Breast epithelium (tissue), 4 donors: ENCODE measurements at regions of chr6 and their contacts with region 1.

Region 1: DNA sequence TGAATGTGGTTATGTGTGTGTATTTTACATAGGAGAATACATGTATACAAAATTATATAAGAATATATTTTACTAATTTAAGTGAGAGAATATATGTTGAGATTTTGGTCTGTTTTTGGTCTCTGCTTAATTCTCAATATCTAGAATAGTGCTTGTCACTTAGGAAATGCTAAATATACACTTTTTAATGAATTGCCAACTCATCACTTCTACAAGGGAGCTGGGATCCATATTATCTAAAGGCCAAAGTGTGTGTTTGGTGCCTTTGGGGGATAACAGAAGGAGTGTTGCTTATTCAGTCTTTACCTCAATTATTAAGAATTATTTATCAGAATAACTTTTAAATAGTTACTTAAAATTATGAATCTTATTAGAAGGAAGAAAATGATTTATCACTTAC is 1304.8 kb downstream of the HACE1 start:
- DNase-seq: no peak
- H3K4me3 ChIP-seq: no peak overlapping the region
- H3K27ac ChIP-seq: no peak overlapping the region
- H3K4me1 ChIP-seq: no peaks in the 10 kb centered on the region
- H3K27me3 ChIP-seq: no peaks in the 10 kb centered on the region
- CTCF ChIP-seq: no peak
- POLR2A ChIP-seq: no peak

Region 2: GRCh38 chr6:102381203-102381602 is 1173.7 kb before region 1 on chr6:
- intact Hi-C with region 1: no loop called
- DNase-seq: no peak
- H3K4me3 ChIP-seq: no peak overlapping the region
- H3K27ac ChIP-seq: no peak overlapping the region
- H3K4me1 ChIP-seq: no peaks in the 10 kb centered on the region
- H3K27me3 ChIP-seq: no peaks in the 10 kb centered on the region
- CTCF ChIP-seq: no peak
- POLR2A ChIP-seq: no peak

Region 3: GRCh38 chr6:103587722-103588121 is 32.8 kb after region 1 on chr6:
- intact Hi-C with region 1: no loop called
- DNase-seq: no peak
- H3K4me3 ChIP-seq: no peak overlapping the region
- H3K27ac ChIP-seq: no peak overlapping the region
- H3K4me1 ChIP-seq: no peaks in the 10 kb centered on the region
- H3K27me3 ChIP-seq: no peaks in the 10 kb centered on the region
- CTCF ChIP-seq: no peak
- POLR2A ChIP-seq: no peak

Region 4: GRCh38 chr6:104095661-104096416 is 540.9 kb after region 1 on chr6:
- intact Hi-C with region 1: loop called (anchors 5 kb)
- DNase-seq: no peak
- H3K4me3 ChIP-seq: no peak overlapping the region
- H3K27ac ChIP-seq: no peak overlapping the region
- H3K4me1 ChIP-seq: no peaks in the 10 kb centered on the region
- H3K27me3 ChIP-seq: no peaks in the 10 kb centered on the region
- CTCF ChIP-seq: no peak
- POLR2A ChIP-seq: no peak